A673 (cell line): ENCODE measurements at regions of chr5 and their contacts with region 1.

Region 1: GRCh38 chr5:134851307-134851923 is 5.6 kb downstream of the C5orf24 start:
- DNase-seq: peak; percentile 70
- H3K4me3 ChIP-seq: no peak overlapping the region
- H3K27ac ChIP-seq: no peak overlapping the region
- H3K4me1 ChIP-seq: peaks cover 17% of the 10 kb centered on the region
- H3K27me3 ChIP-seq: no peaks in the 10 kb centered on the region
- CTCF ChIP-seq: peak; percentile 66

Region 2: GRCh38 chr5:134758504-134759341 is 92.7 kb before region 1 on chr5 and contains the start of gene DDX46:
- CTCF ChIA-PET with region 1: no interaction called
- POLR2A ChIA-PET with region 1: no interaction called
- intact Hi-C with region 1: loop called (anchors 2 kb)
- DNase-seq: peak; percentile 97
- H3K4me3 ChIP-seq: peak within 1 kb of the TSS; percentile 96
- H3K27ac ChIP-seq: peak within 1 kb of the TSS; percentile 89
- H3K4me1 ChIP-seq: peaks cover 8% of the 10 kb centered on the region
- H3K27me3 ChIP-seq: no peaks in the 10 kb centered on the region
- CTCF ChIP-seq: peak; percentile 94
- total RNA-seq, gene DDX46: 110 and 128 TPM in 2 replicates